Colonic mucosa (tissue), 4 donors: ENCODE measurements at regions of chr14 and their contacts with region 1.

Region 1: GRCh38 chr14:99982537-99983250 is 82.5 kb upstream of the EVL start:
- DNase-seq: peak; percentile 58
- H3K4me3 ChIP-seq: no peak overlapping the region
- H3K27ac ChIP-seq: no peak overlapping the region
- H3K4me1 ChIP-seq: no peaks in the 10 kb centered on the region
- H3K27me3 ChIP-seq: peaks cover 11% of the 10 kb centered on the region
- CTCF ChIP-seq: peak; percentile 61

Region 2: GRCh38 chr14:100108042-100108825 is 125.5 kb after region 1 on chr14:
- intact Hi-C with region 1: loop called (anchors 5 kb)
- DNase-seq: peak; percentile 85
- H3K4me3 ChIP-seq: no peak overlapping the region
- H3K27ac ChIP-seq: no peak overlapping the region
- H3K4me1 ChIP-seq: no peaks in the 10 kb centered on the region
- H3K27me3 ChIP-seq: no peaks in the 10 kb centered on the region
- CTCF ChIP-seq: peak; percentile 78

Region 3: GRCh38 chr14:100256339-100256895 is 273.7 kb after region 1 on chr14:
- intact Hi-C with region 1: no loop called
- DNase-seq: no peak
- H3K4me3 ChIP-seq: no peak overlapping the region
- H3K27ac ChIP-seq: no peak overlapping the region
- H3K4me1 ChIP-seq: peaks cover 5% of the 10 kb centered on the region
- H3K27me3 ChIP-seq: no peaks in the 10 kb centered on the region
- CTCF ChIP-seq: no peak